Dorsolateral prefrontal cortex (tissue), 120 donors: ENCODE measurements at regions of chr7 and their contacts with region 1.

Region 1: DNA sequence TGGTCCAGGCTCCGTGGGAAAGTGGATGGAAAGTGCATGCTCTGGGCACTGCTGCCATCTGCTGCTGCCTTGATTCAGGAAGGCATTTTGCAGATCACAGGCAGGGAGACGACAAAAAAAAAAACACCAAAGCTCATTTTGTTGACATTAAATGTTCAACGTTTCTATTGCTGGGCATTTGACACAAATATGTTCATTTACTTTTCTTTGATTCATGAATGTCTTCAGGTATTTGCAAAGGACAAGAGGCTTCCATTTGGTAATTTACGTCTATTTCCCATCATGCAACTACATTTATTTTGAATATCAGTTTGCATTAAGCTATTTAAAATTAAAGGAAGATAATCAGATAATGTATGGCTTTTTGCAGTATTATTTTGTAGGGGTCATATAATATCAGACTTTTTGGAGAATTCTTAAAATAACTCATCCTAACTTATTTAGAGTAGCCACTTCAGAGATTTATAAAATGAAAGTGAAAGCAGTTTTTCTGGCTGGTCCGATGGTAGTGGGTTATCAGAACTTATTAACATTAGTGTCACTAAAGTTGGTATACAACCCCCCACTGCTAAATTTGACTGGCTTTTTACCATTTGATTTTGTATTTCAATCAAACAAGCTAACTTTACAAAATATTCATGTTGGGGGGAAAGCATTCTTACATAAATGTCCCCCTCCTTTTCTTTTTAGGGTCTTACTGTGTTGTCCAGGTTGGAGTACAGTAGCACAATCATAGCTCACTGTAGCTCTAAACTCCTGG is 65.3 kb downstream of the PDIA4 start:
- DNase-seq: peak; percentile 58 to 87 (median 78)
- H3K4me3 ChIP-seq: peak overlapping the region; percentile 48 to 83 (median 66)
- H3K27ac ChIP-seq: peak overlapping the region; percentile 26 to 97 (median 89)
- H3K27me3 ChIP-seq: no peaks in the 10 kb centered on the region
- CTCF ChIP-seq: peak; percentile 39 to 97 (median 85)

Region 2: GRCh38 chr7:148262721-148263229 is 700.2 kb before region 1 on chr7:
- intact Hi-C with region 1: loop called (anchors 5 to 10 kb)
- DNase-seq: peak; percentile 62 to 88 (median 78)
- H3K4me3 ChIP-seq: peak overlapping the region in 58 of 59 donors; percentile 3 to 61 (median 40)
- H3K27ac ChIP-seq: peak overlapping the region in 36 of 59 donors; percentile 1 to 80 (median 54)
- H3K27me3 ChIP-seq: no peaks in the 10 kb centered on the region
- CTCF ChIP-seq: peak; percentile 84 to 99 (median 96)

Region 3: DNA sequence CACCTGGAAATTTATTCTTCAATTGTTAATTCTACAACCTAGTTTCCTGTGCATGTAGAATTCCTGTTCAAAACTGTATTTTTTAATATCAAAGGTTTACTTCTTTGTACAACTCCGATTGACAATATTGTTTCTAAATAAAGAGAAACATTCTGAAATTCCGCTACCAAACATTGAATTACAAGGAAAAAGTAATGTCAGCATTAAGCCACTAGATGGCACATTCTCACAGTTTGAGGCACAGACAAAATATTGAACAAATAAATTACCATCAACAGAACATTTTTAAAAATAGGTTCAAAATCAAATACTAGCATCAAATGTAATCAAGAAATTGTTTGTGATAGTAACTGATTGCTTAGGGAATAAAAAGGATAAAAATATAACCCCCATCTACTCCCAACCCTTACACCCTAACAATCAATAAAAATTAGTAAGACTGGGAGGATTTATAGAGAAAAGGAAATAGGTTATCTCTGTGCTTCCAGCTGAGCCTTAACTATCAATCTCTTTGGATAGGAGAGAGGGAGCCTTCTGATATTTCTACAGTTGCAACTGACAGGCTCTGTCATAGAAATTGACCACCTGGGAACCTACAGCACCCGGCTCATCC is 459.0 kb before region 1 on chr7:
- intact Hi-C with region 1: loop called (anchors 2 to 5 kb)
- DNase-seq: no peak
- H3K4me3 ChIP-seq: no peak overlapping the region
- H3K27ac ChIP-seq: no peak overlapping the region
- H3K27me3 ChIP-seq: no peaks in the 10 kb centered on the region
- CTCF ChIP-seq: peak; percentile 65 to 91 (median 81)

Region 4: GRCh38 chr7:148698397-148699023 is 264.5 kb before region 1 on chr7 and contains the start of gene CUL1:
- intact Hi-C with region 1: loop called (anchors 10 kb)
- DNase-seq: peak; percentile 40 to 85 (median 64)
- H3K4me3 ChIP-seq: peak within 1 kb of the TSS; percentile 68 to 98 (median 90)
- H3K27ac ChIP-seq: peak within 1 kb of the TSS; percentile 61 to 99 (median 94)
- H3K27me3 ChIP-seq: no peaks in the 10 kb centered on the region
- CTCF ChIP-seq: peak in 2 of 56 donors; percentile 2 to 28
- total RNA-seq, gene CUL1: 36.5 to 74.2 (median 59.6) TPM

Region 5: GRCh38 chr7:148987010-148987750 is 24.2 kb after region 1 on chr7:
- intact Hi-C with region 1: loop called in 1 of 2 experiments (anchors 2 kb)
- DNase-seq: peak; percentile 50 to 92 (median 82)
- H3K4me3 ChIP-seq: peak overlapping the region; percentile 41 to 95 (median 76)
- H3K27ac ChIP-seq: peak overlapping the region; percentile 26 to 95 (median 87)
- H3K27me3 ChIP-seq: no peaks in the 10 kb centered on the region
- CTCF ChIP-seq: peak in 6 of 56 donors; percentile 5 to 17 (median 9)